ENCODE measurements at regions of chr1 and their contacts with region 1.

Region 1: DNA sequence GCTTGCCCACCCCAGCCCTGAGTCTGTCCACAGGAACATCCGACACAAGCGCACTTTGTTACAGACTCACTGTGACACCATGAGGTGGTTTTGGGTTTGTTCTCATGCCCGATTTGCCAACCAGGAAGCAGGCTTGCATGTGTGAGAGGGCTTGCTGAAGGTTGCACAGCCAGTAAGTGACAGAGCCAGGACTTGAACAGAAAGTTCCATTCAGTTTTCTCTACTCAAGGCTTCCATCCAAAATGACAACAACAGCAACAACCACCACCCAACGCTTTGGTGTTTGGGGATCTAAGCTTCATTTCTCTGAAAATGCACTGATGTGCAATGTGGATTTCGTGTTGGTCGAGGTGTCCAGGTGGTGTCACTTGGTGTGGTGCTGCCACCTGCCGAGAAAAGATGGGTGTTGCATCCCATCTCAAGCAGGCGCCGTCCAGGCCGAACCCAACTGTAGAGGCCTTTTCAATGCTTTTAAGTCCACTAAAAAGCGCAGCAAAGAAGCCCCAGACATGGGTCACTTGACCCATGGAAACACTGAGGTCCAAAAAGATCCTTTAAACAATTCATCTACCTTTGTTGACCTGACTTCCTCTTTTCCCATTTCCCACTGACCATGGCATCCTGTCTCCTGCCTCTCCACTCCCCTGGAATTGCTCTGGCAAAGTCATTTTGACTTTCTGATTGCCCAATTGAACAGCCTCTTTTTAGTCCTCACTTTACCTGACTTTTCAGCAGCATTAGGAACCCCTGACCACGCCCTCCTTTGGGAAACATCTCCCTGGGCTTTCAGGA is 12.2 kb downstream of the CITED4 start:
- DNase-seq: peak; percentile 86

Region 2: GRCh38 chr1:40668769-40669525 is 181.1 kb before region 1 on chr1:
- intact Hi-C with region 1: loop called (anchors 5 kb)
- DNase-seq: peak; percentile 91

Region 3: DNA sequence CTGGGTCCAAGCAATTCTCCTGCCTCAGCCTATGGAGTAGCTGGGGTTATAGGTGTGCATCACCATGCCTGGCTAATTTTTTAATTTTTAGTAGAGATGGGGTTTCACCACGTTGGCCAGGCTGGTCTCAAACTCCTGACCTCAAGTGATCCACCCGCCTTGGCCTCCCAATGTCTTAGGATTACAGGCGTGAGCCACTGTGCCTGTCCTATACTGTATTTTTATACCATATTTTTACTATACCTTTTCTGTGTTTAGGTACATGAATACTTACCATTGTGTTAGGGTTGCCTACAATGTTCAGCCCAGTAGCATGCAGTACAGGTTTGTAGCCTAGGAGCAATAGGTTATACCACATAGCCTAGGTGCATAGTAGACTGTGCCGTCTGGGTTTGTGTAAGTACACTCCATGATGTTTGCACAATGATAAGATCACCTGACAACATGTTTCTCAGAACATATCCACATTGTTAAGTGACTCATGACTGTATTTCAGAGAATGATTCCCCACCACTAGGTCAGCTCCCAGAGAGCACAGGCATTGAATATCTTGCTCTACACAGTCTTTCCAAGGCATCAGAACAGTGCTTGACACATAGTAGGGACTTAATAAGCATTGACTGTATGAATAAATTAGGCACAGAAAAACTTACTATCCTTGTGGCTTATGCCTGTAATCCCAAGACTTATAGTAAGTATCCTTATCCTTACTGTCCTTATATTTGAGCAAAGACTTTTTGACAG is 18.2 kb after region 1 on chr1:
- intact Hi-C with region 1: no loop called
- DNase-seq: no peak

Region 4: DNA sequence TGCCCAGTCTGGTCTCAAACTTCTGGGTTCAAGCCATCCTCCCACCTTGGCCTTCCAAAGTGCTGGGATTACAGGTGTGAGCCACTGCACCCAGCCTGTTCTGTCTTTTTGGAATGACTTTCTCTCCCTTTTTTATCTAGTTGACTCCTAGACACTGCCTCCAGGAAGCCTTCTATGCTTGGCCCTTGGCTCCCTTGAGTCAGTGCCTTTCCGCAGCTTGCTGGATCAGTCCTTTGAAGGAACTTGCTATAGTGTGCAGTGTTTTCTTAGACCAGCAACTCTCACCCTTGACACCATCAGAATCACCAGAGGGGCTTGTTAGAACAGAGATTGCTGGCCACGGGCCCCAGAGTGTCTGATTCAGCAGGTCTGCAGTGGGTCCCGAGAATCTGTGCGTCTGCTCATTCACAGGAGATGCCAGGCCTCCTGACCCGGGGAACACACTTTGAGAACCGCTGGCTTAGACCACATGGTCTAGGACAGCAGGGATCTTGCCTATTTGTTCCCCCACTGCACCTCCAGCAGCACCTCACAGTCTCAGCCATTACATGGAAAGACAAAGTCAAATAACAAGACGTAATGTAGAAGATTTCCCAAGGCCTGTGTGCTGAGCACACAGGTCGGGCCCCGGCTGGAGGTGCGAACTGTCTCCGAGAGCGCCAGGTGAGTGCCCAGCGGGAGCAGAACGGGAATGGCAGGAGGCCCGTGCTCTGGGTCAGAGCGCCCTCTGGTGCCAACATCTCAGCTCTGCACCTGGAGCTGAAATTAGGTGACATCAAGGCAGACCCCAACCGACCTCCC is 102.1 kb after region 1 on chr1:
- intact Hi-C with region 1: loop called (anchors 1 kb)
- DNase-seq: peak; percentile 85

Measured in cardiac septum (tissue), 1 donor.